H1 (cell line): ENCODE measurements at regions of chr1 and their contacts with region 1.

Region 1: DNA sequence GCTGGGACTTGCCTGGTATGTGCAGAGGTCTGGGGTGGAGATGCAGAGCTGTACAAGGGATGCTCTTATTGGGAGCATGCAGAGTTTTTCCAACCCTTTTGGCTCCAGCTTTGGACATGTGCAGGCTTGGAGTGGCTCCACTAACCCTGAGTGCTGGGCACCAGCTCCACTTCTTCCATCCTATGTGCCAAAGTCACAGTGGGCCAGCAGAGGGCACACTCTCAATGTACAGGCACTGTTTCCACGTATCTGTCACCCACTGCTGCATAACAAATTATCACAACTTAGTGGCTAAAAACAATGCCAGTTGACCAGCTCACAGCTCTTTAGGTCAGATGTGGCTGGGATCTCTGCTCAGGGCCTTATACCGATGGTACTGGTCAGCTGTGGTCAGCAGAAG is 631.8 kb downstream of the AJAP1 start:
- DNase-seq: peak in 1 of 2 experiments; percentile 50
- H3K4me3 ChIP-seq: no peak overlapping the region
- H3K27ac ChIP-seq: no peak overlapping the region
- H3K4me1 ChIP-seq: no peaks in the 10 kb centered on the region
- H3K27me3 ChIP-seq: no peaks in the 10 kb centered on the region
- CTCF ChIP-seq: peak; percentile 28 to 62 (median 61); a peak in 3 of 4 replicates
- EP300 ChIP-seq: no peak
- POLR2A ChIP-seq: no peak
- RAD21 ChIP-seq: peak; percentile 50 to 54

Region 2: DNA sequence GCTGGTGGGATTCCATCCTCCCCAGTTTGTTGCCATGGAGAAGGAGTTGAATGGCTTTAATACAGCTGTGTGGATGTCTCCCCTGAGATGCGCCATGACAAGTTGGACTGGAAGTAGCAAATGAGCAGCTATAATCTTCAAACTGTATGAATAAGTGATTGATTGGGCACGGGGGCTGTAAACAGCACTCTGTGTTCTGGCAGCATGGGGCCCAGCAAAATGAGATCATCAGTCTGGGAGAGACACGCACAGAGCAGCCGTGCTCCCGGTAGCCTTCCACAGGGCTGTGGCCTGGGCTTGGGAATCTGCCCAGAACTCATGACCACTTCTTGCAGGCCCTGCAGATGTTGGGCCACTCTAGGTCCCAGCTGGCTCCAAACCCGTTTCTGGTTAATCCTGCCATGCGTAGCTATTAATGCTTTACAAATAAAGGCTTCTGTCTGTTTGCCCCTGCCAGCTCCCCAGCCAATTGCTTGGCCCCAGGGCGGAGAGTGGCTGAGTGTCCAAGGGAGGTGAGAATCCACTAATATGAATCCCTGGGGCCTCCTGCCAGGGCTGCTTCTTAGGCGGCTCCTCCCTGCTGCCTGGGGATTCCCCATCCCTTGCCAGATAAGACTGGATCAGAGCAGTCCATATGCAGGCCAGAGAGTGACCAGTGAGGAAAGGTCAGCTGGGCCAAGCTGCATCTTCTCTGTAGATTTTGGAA is 11.1 kb after region 1 on chr1:
- CTCF ChIA-PET with region 1: interaction called, 11 read pairs
- POLR2A ChIA-PET with region 1: no interaction called
- DNase-seq: no peak
- H3K4me3 ChIP-seq: no peak overlapping the region
- H3K27ac ChIP-seq: no peak overlapping the region
- H3K4me1 ChIP-seq: no peaks in the 10 kb centered on the region
- H3K27me3 ChIP-seq: no peaks in the 10 kb centered on the region
- CTCF ChIP-seq: no peak
- EP300 ChIP-seq: no peak
- POLR2A ChIP-seq: no peak
- RAD21 ChIP-seq: no peak

Region 3: GRCh38 chr1:5318143-5318816 is 32.0 kb after region 1 on chr1:
- CTCF ChIA-PET with region 1: no interaction called
- POLR2A ChIA-PET with region 1: no interaction called
- DNase-seq: no peak
- H3K4me3 ChIP-seq: no peak overlapping the region
- H3K27ac ChIP-seq: no peak overlapping the region
- H3K4me1 ChIP-seq: no peaks in the 10 kb centered on the region
- H3K27me3 ChIP-seq: no peaks in the 10 kb centered on the region
- CTCF ChIP-seq: no peak
- EP300 ChIP-seq: no peak
- POLR2A ChIP-seq: no peak
- RAD21 ChIP-seq: no peak

Region 4: GRCh38 chr1:5448486-5448885 is 162.2 kb after region 1 on chr1:
- CTCF ChIA-PET with region 1: interaction called, 10 read pairs
- POLR2A ChIA-PET with region 1: no interaction called
- DNase-seq: peak in 1 of 2 experiments; percentile 79
- H3K4me3 ChIP-seq: no peak overlapping the region
- H3K27ac ChIP-seq: no peak overlapping the region
- H3K4me1 ChIP-seq: no peaks in the 10 kb centered on the region; a peak in 1 of 7 replicates
- H3K27me3 ChIP-seq: no peaks in the 10 kb centered on the region
- CTCF ChIP-seq: peak; percentile 60 to 83 (median 73)
- EP300 ChIP-seq: no peak
- POLR2A ChIP-seq: no peak
- RAD21 ChIP-seq: peak; percentile 82 to 86